Activated naive CD4-positive, alpha-beta T cell treated with anti-CD3 and anti-CD28 coated beads, Interleukin-2, amount 10 ng/mL, durations not matched to agents 7 days and 5 days (primary cell): ENCODE measurements at regions of chr9 and their contacts with region 1.

Region 1: DNA sequence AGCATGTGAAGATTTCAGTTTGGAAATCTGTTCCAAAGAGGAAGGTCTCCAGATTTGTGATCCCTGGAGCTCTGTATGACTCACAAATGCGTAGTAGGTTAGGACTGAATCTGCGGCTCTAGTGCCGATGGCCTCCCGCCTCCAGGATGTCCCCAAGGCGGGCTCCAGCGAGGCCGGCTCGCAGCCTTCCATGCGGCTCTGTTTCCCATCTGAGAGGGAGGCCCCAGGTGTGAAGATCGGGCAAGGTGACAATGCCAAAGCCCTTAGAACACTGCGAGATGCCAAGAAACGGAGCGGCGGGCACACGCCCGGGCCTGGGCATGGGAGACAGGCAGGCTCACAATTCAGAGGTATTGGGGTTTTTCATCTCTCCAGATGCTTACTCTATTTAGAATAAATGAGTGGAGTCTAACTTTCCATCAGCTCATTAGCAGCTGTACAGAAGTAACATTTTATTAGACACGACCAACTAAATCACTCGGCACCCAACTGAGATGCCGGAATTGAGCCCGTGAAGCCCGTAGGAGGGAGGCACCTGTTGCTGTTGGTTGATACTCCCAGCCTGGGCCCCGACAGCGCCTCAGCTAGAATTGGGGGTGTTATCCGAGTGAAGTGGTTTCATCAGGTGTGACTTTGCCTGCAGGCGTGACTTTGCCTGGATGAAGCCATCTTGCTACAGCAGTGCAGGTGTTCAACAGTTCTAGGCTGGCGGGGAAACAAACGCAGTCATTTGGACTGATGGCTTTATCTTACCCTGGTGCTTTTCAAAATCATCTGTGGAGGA is 7.4 kb upstream of the MRPS2 start:
- DNase-seq: peak; percentile 8
- H3K4me3 Mint-ChIP-seq: no peak overlapping the region
- H3K27ac Mint-ChIP-seq: no peak overlapping the region
- H3K4me1 Mint-ChIP-seq: no peaks in the 10 kb centered on the region
- H3K27me3 Mint-ChIP-seq: peaks cover 10% of the 10 kb centered on the region

Region 2: DNA sequence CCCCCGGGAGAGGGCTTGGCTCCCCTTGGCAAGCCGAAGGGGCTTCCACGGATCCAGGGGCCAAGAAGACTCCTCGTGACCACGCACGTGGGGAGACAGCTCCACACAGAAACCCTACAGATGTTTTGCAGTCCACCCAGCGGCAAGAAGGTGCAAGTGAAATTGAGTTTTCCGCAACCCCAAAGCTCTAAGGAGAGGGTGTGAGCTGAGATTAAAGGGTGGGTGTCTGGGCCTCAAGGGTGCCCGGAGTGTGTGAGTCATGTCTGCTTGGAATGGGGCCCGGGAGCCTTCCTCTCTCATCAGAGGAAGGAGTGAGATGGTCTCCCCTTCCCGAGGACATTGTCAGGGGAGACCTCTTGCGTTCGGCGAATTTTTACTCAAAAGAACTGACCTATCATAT is 326.5 kb before region 1 on chr9:
- CTCF ChIA-PET with region 1: no interaction called
- DNase-seq: no peak
- H3K4me3 Mint-ChIP-seq: no peak overlapping the region
- H3K27ac Mint-ChIP-seq: no peak overlapping the region
- H3K4me1 Mint-ChIP-seq: no peaks in the 10 kb centered on the region
- H3K27me3 Mint-ChIP-seq: no peaks in the 10 kb centered on the region

Region 3: DNA sequence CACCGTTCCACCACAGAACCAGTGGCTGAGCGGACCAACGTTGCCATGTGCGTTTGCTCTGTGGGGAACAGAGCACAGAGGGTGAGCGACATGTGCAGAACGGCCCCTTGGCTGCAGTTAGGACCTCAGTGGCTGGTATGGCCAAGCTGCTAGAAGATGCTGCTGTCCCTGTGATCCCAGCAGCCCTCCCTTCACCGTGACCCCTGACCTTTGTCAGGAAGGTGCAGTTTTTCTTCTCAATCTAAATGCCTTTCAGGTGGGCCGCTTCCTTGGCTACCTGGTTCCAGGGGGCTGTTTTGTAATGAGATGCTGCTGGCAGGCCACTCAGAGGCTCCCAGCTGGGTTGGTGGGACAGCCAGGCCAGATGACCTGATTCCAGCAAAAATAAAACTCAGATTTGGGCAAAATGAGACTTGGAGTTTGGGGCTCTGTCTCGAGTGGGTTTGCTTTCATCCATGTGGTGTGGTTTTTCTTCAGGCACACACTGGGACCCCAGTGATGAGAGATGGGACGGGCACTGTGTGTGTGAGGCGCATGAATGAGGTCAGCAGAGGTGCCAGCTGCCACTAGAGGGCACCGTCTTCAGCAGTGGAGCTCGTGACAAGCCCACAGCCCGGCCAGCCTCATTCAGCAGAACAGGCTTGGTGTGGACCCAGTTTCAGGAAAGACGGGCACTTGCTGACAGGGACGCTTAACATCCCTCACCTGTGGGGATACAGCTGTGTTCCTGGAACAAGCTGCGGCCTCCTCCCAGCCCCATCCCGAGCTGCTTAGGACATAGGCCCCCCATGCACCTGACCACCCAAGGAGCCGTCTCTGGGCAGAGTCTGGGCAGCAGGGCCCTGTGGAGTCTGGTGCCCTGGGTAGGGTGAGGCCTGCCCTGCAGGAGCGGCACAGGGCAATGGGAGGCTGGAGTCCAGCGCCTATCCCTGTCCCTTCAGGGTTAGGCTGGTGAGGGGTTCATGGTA is 11.5 kb after region 1 on chr9:
- CTCF ChIA-PET with region 1: interaction called, 11 read pairs
- DNase-seq: peak; percentile 71
- H3K4me3 Mint-ChIP-seq: no peak overlapping the region
- H3K27ac Mint-ChIP-seq: no peak overlapping the region
- H3K4me1 Mint-ChIP-seq: peaks cover 16% of the 10 kb centered on the region
- H3K27me3 Mint-ChIP-seq: peaks cover 11% of the 10 kb centered on the region